CD8-positive, alpha-beta T cell (primary cell): ENCODE measurements at regions of chr5 and their contacts with region 1.

Region 1: GRCh38 chr5:81194633-81195333 is 38.3 kb upstream of the CKMT2 start:
- DNase-seq: peak; percentile 57 to 87 (median 76)
- ATAC-seq: peak; percentile 100
- H3K4me3 ChIP-seq: no peak overlapping the region
- H3K4me3 Mint-ChIP-seq: no peak overlapping the region
- H3K27ac ChIP-seq: no peak overlapping the region
- H3K27ac Mint-ChIP-seq: no peak overlapping the region
- H3K4me1 ChIP-seq: peaks cover 6% of the 10 kb centered on the region
- H3K4me1 Mint-ChIP-seq: peaks cover 9% of the 10 kb centered on the region
- H3K27me3 ChIP-seq: no peaks in the 10 kb centered on the region
- H3K27me3 Mint-ChIP-seq: no peaks in the 10 kb centered on the region
- CTCF ChIP-seq: peak; percentile 96

Region 2: DNA sequence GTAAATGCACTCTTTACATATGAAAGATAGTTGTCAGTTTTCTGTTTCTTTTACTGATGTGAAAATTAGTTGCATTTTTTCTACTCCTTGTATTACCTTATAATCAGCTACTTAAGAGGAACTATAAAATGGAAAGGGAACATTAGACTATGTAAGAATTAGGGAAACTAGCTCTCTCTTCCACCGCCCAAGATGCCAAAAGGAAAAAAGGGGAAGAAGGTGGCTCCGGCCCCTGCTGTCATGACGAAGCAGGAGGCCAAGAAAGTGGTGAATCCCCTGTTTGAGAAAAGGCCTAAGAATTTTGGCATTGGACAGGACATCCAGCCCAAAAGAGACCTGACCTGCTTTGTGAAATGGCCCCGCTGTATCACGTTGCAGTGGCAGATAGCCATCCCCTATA is 1665.7 kb before region 1 on chr5:
- CTCF ChIA-PET with region 1: no interaction called
- POLR2A ChIA-PET with region 1: no interaction called
- intact Hi-C with region 1: no loop called
- DNase-seq: no peak
- ATAC-seq: no peak
- H3K4me3 ChIP-seq: no peak overlapping the region
- H3K4me3 Mint-ChIP-seq: no peak overlapping the region
- H3K27ac ChIP-seq: no peak overlapping the region
- H3K27ac Mint-ChIP-seq: no peak overlapping the region
- H3K4me1 ChIP-seq: no peaks in the 10 kb centered on the region
- H3K4me1 Mint-ChIP-seq: no peaks in the 10 kb centered on the region
- H3K27me3 ChIP-seq: no peaks in the 10 kb centered on the region
- H3K27me3 Mint-ChIP-seq: peaks cover 9% of the 10 kb centered on the region
- CTCF ChIP-seq: no peak

Region 3: DNA sequence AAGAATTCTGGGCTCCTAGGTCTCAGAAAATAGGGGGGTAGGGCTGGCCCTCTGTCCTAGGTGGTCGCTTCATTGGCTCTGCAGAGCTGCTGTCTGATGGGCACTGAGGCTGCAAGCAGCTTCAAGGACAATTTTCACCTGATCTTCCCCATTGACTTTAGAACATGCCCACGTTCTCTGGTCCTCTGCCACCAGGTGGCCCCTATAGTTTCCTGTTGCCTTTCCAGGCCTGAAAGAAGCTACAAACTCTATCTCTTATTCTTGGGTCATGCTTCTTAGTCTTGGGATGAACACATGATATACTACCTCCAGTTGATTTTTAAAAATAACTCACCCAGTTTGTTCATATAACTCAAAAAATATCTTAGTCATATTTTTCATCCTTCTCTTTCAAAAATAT is 848.7 kb before region 1 on chr5:
- CTCF ChIA-PET with region 1: no interaction called
- POLR2A ChIA-PET with region 1: no interaction called
- intact Hi-C with region 1: loop called in 1 of 2 experiments (anchors 5 kb)
- DNase-seq: peak in 8 of 9 experiments; percentile 3 to 56 (median 22)
- ATAC-seq: peak; percentile 57
- H3K4me3 ChIP-seq: no peak overlapping the region
- H3K4me3 Mint-ChIP-seq: no peak overlapping the region
- H3K27ac ChIP-seq: no peak overlapping the region
- H3K27ac Mint-ChIP-seq: no peak overlapping the region
- H3K4me1 ChIP-seq: no peaks in the 10 kb centered on the region
- H3K4me1 Mint-ChIP-seq: peaks cover 4% of the 10 kb centered on the region
- H3K27me3 ChIP-seq: no peaks in the 10 kb centered on the region
- H3K27me3 Mint-ChIP-seq: peaks cover 8% of the 10 kb centered on the region
- CTCF ChIP-seq: no peak

Region 4: DNA sequence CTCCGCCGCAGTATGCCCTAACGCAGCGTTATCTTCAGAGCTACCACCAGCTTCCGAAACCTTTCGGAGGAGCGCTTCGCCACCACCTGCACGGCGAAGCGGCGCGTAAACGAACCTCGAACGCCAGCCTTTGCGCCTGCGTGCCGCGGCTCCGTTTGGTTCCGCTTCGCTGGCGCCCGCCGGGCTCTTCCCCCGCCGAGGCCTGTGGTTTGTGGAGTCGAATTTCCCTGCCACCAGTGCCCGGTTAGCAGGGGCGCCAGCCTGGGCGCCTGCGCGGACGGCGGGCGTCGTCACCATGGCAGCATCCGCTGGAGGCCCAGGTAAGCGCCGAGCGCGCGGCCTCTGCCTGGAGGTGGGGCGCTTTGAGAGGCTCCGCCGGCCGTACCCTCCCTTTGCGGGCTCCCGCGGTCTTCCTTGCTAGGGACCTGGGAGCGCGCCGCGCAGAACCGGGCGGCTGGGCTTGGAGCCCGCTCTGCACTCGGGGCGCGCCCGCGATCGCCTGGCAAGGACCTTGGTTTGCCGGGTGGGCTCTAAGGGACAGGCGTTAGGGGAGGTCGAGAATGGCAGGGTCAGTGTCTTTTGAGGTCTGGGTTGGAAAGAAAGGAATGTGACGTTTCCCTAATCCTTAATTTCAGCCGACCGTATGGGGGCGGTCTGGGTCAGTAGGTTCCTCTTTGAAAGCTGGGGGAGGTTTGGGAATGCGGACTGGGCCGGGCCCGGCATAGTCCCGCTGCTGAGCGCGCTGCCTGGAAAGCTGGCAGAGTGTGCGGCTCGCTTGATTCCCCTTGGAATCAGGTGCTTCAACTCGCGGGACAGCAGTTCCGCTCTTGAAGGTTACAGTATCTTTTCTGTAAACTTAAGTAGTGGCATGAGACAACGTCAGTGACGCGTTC is 706.7 kb before region 1 on chr5 and contains the start of gene FAM151B:
- CTCF ChIA-PET with region 1: no interaction called
- POLR2A ChIA-PET with region 1: no interaction called
- intact Hi-C with region 1: loop called in 1 of 2 experiments (anchors 10 kb)
- DNase-seq: peak; percentile 5 to 80 (median 61)
- ATAC-seq: peak; percentile 83
- H3K4me3 ChIP-seq: peak within 1 kb of the TSS; percentile 46 to 68
- H3K4me3 Mint-ChIP-seq: peak within 1 kb of the TSS; percentile 81
- H3K27ac ChIP-seq: peak within 1 kb of the TSS in 1 of 2 experiments; percentile 10
- H3K27ac Mint-ChIP-seq: peak within 1 kb of the TSS; percentile 52
- H3K4me1 ChIP-seq: peaks cover 9% of the 10 kb centered on the region
- H3K4me1 Mint-ChIP-seq: peaks cover 12% of the 10 kb centered on the region
- H3K27me3 ChIP-seq: peaks cover 0 to 7% of the 10 kb centered on the region in 2 experiments
- H3K27me3 Mint-ChIP-seq: peaks cover 16% of the 10 kb centered on the region
- CTCF ChIP-seq: no peak
- total RNA-seq, gene FAM151B: 0.19 TPM in 1 of 2 experiments, not detected in the other

Region 5: DNA sequence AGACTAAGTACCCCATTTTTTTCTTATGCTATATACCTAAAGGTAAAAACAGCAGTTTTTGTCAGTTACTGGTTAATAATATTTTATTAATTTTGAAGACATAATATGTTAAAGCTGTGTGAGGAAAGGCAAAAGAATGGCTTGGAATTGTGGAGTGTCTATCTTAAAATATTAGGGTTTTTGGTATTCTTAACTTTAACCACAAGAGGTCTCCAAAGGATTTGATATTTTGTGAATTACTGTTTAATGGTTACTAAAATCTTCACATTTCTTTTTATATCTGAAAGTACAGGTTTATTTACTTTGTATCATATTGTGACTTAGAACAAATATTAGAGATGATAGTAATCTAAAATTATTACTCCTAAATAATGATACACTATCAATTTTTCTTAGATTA is 508.0 kb before region 1 on chr5:
- CTCF ChIA-PET with region 1: interaction called, 23 read pairs
- POLR2A ChIA-PET with region 1: no interaction called
- intact Hi-C with region 1: loop called (anchors 1 kb)
- DNase-seq: peak in 2 of 9 experiments; percentile 35 to 50
- ATAC-seq: no peak
- H3K4me3 ChIP-seq: no peak overlapping the region
- H3K4me3 Mint-ChIP-seq: no peak overlapping the region
- H3K27ac ChIP-seq: no peak overlapping the region
- H3K27ac Mint-ChIP-seq: no peak overlapping the region
- H3K4me1 ChIP-seq: no peaks in the 10 kb centered on the region
- H3K4me1 Mint-ChIP-seq: peaks cover 16% of the 10 kb centered on the region
- H3K27me3 ChIP-seq: no peaks in the 10 kb centered on the region
- H3K27me3 Mint-ChIP-seq: no peaks in the 10 kb centered on the region
- CTCF ChIP-seq: peak; percentile 54

Region 6: GRCh38 chr5:80804332-80804731 is 390.5 kb before region 1 on chr5:
- CTCF ChIA-PET with region 1: interaction called, 4 read pairs
- POLR2A ChIA-PET with region 1: no interaction called
- intact Hi-C with region 1: loop called in 1 of 2 experiments (anchors 1 kb)
- DNase-seq: peak in 2 of 9 experiments; percentile 10 to 26
- ATAC-seq: no peak
- H3K4me3 ChIP-seq: no peak overlapping the region
- H3K4me3 Mint-ChIP-seq: no peak overlapping the region
- H3K27ac ChIP-seq: no peak overlapping the region
- H3K27ac Mint-ChIP-seq: no peak overlapping the region
- H3K4me1 ChIP-seq: no peaks in the 10 kb centered on the region
- H3K4me1 Mint-ChIP-seq: no peaks in the 10 kb centered on the region
- H3K27me3 ChIP-seq: no peaks in the 10 kb centered on the region
- H3K27me3 Mint-ChIP-seq: no peaks in the 10 kb centered on the region
- CTCF ChIP-seq: no peak

Region 7: DNA sequence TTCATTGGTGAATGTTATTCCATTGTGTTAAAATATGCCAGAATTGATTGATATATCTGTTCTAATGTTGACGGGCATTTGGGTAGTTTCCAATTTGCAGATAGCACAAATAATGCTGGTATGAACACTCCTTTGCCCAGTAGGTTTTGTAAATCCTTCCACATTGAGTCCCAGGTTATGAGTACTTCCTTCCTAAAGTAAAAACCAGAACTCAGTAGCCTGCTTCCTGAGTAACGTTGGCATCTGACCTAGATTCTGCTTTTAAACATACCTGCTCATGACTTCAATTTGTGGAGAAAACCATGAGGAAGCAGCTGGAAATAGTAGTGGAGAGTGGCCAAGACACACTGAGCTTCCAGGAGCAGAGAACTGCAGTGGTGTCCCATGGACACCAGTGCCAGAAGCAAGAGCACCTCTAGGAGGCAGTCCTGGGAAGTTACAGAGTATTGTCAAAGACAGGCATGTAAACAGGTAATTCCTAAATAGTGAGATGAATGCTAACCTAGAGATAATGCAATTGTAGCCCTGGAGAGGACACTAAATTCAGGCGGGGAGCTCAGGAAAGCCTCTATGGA is 258.9 kb before region 1 on chr5:
- CTCF ChIA-PET with region 1: interaction called, 5 read pairs
- POLR2A ChIA-PET with region 1: no interaction called
- intact Hi-C with region 1: loop called in 1 of 2 experiments (anchors 1 kb)
- DNase-seq: peak in 2 of 9 experiments; percentile 16 to 31
- ATAC-seq: peak; percentile 29
- H3K4me3 ChIP-seq: no peak overlapping the region
- H3K4me3 Mint-ChIP-seq: no peak overlapping the region
- H3K27ac ChIP-seq: no peak overlapping the region
- H3K27ac Mint-ChIP-seq: no peak overlapping the region
- H3K4me1 ChIP-seq: no peaks in the 10 kb centered on the region
- H3K4me1 Mint-ChIP-seq: peaks cover 7% of the 10 kb centered on the region
- H3K27me3 ChIP-seq: no peaks in the 10 kb centered on the region
- H3K27me3 Mint-ChIP-seq: no peaks in the 10 kb centered on the region
- CTCF ChIP-seq: no peak